Ovary (tissue), 10 donors: ENCODE measurements at regions of chr9 and their contacts with region 1.

Region 1: GRCh38 chr9:22316645-22317044 is 130.0 kb upstream of the DMRTA1 start:
- DNase-seq: no peak
- H3K4me3 ChIP-seq: no peak overlapping the region
- H3K27ac ChIP-seq: no peak overlapping the region
- H3K4me1 ChIP-seq: no peaks in the 10 kb centered on the region
- H3K27me3 ChIP-seq: no peaks in the 10 kb centered on the region
- CTCF ChIP-seq: no peak
- EP300 ChIP-seq: no peak
- POLR2A ChIP-seq: no peak

Region 2: DNA sequence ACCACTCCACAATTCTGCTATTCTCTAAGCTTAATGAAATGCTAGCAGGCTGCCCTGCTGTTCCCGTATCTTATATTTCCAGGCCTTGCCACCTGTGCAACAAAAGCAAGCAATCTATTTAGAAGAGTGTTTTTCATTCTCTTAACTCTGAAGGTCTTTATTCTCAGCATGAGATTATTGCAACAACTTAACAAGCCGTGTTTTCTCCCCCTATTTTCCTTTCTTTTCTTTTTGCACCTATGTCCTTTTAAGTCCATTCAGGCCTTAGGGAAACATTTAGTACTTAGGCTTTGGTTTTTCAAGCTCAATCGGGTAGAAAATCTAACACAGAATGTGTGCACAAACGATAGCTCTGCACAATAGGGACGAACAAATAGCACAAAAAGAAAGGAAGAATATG is 40.3 kb after region 1 on chr9:
- intact Hi-C with region 1: loop called in 1 of 4 experiments (anchors 1 kb)
- DNase-seq: no peak
- H3K4me3 ChIP-seq: no peak overlapping the region
- H3K27ac ChIP-seq: no peak overlapping the region
- H3K4me1 ChIP-seq: no peaks in the 10 kb centered on the region
- H3K27me3 ChIP-seq: no peaks in the 10 kb centered on the region
- CTCF ChIP-seq: no peak
- EP300 ChIP-seq: no peak
- POLR2A ChIP-seq: no peak